PC-9 (cell line): ENCODE measurements at regions of chr19 and their contacts with region 1.

Region 1: GRCh38 chr19:39858541-39858940 is 12.4 kb upstream of the FBL start:
- DNase-seq: no peak
- H3K4me3 ChIP-seq: no peak overlapping the region
- H3K27ac ChIP-seq: no peak overlapping the region
- H3K4me1 ChIP-seq: no peaks in the 10 kb centered on the region
- H3K27me3 ChIP-seq: peaks cover 9% of the 10 kb centered on the region
- CTCF ChIP-seq: no peak

Region 2: DNA sequence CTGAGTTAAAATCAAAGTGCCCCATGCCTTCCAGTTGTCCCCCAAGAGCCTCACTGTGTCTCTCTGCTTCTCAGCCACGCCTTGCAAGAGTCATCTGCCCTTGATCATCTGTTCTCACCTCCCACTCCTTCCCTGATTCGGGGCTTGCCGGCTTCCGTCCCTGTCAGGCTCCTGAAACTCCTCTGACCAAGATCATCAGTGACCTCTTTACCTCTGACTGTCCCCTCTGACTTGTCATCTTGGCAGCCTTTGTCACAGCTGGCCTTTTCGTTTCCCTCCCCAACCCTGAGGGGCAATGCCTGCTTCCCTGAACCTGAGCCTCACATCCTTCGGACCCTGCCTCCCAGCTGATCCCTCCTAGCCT is 1307.1 kb before region 1 on chr19:
- CTCF ChIA-PET with region 1: interaction called, 16 read pairs
- POLR2A ChIA-PET with region 1: no interaction called
- intact Hi-C with region 1: no loop called
- DNase-seq: no peak
- H3K4me3 ChIP-seq: no peak overlapping the region
- H3K27ac ChIP-seq: no peak overlapping the region
- H3K4me1 ChIP-seq: no peaks in the 10 kb centered on the region
- H3K27me3 ChIP-seq: no peaks in the 10 kb centered on the region
- CTCF ChIP-seq: no peak

Region 3: GRCh38 chr19:39645800-39646411 is 212.6 kb before region 1 on chr19:
- CTCF ChIA-PET with region 1: no interaction called
- POLR2A ChIA-PET with region 1: no interaction called
- intact Hi-C with region 1: no loop called
- DNase-seq: peak in 1 of 2 experiments; percentile 8
- H3K4me3 ChIP-seq: no peak overlapping the region
- H3K27ac ChIP-seq: no peak overlapping the region
- H3K4me1 ChIP-seq: no peaks in the 10 kb centered on the region
- H3K27me3 ChIP-seq: peaks cover 1% of the 10 kb centered on the region
- CTCF ChIP-seq: no peak